ENCODE measurements at regions of chr2 and their contacts with region 1.

Region 1: GRCh38 chr2:240840435-240841080 is 20.5 kb upstream of the KIF1A start:
- DNase-seq: peak; percentile 62
- CTCF ChIP-seq: peak; percentile 54

Region 2: DNA sequence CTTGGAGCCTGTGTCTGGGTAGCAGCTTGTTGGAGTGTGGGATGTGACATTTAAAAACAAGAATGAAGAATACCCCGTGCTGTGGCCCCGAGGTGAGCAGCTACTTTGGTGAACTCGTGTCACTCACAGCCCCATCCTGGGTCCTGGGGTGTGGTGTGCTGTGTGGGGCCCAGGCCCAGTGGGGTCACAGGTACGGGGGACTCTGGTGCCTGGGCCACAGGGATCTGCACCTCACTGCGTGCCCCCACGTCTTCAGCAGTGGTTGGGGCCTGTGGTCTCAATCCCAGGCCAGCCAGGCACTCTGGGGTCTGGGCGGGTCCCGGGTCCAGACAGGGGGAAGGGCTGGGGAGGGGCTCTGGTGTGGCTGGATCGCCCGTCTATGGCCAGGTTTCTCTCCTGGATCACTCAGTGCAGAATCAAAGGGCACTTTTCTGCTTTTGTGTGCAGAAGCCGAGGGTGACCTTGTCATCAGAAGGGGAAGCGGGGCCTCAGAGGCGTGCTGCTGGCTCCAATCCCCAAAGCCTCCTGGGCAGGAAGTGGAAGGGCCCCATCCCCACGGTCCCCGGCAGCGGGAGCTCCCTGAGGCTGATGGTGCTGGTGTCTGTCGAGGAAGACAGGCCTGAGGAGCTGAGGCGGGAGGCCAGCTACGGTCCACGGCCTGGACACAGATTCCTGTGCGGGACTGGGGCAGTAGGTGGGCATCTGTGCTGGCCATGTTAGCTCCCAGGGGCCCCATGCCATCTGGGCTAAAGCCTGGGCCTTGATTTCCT is 213.8 kb before region 1 on chr2:
- CTCF ChIA-PET with region 1: no interaction called
- POLR2A ChIA-PET with region 1: no interaction called
- DNase-seq: no peak
- CTCF ChIP-seq: no peak

Region 3: DNA sequence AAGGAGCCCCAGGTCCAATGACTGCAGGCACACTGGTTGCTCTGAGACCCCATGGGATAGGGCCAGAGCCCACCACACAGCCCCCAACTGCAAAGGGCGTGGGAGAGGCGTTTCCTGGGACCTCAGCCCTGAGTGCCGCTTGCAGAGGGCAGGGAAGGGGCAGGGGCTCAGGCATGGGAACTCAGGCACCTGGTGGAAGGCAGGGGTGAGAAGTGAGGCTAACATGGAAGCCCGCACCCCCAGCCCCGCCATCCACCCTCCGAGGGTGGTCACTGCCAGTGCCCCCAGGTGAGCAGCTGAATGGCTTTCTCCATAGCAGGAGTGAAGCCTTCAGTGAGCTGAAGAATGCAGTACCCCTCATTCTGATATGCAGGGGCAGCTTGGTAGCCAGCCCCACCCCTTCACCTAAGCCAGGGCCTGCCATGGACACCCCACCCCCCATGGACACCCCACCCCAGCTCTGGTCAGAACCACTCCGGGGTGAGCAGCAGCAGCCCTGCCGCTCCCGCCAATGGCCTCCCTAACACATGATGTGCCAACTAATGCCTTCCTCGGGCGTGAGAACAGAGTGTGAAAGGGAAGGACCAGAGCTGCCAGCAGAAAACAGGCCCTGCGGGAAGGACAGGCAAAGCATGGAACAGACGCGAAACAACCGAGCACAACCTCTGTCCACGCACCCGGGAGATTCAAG is 27.2 kb before region 1 on chr2:
- CTCF ChIA-PET with region 1: no interaction called
- POLR2A ChIA-PET with region 1: no interaction called
- DNase-seq: no peak
- CTCF ChIP-seq: no peak

Region 4: DNA sequence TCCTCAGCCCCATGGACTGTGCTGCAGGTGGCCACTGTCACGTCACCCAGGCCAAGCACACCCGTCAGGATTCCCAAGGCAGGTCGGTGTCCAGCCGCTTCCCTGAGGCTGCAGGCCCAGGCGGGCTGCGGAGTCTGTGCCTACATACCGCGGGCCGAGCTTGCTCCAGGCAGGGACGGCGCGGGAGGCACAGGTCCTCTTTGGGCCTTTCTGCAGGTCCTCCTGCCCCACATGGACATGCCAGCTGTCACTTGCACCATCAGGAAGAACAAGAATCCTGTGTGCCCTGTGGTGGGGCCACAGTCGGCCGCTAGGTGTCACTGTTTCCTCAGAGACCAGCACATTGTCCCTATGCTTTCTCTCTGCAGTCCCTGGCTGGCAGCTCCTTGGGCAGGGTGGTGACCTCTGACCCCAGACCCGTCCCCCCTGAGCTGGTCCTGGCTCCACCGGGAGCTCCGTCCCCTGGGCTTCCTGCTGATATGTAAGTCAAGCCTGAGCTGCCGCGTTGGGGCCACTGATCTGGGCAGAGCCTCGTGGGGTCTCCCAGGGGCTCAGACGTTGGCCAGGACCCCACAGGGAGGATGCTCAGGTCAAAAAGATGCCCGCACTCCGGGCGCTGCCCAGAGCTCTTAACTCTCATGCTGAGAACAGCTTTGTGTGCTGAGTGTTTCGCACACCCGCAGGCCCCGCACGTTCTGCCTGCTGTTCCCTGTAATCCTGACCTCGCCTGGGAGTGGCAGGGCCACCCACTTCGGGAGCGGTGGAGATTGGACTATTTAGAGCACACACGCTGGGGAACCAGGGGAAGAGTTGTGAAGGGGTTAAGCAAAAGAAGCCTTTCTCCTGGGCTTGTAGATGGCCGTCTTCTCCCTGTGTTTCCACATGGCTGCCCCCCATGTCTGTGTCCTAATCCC is 10.8 kb after region 1 on chr2:
- CTCF ChIA-PET with region 1: interaction called, 12 read pairs
- POLR2A ChIA-PET with region 1: no interaction called
- DNase-seq: peak; percentile 89
- CTCF ChIP-seq: peak; percentile 96

Measured in GM10248 (cell line).